Dendritic cell treated with granulocyte-macrophage colony-stimulating factor and Interleukin-4, amounts not matched to agents 40 ng/mL and 50 ng/mL, for 4 days (primary cell): ENCODE measurements at regions of chr6 and their contacts with region 1.

Region 1: GRCh38 chr6:147202516-147203312 is 1.5 kb upstream of the STXBP5 start:
- H3K4me3 Mint-ChIP-seq: peak overlapping the region; percentile 85
- H3K27ac Mint-ChIP-seq: peak overlapping the region; percentile 94
- H3K4me1 Mint-ChIP-seq: peaks cover 35% of the 10 kb centered on the region
- H3K27me3 Mint-ChIP-seq: no peaks in the 10 kb centered on the region

Region 2: GRCh38 chr6:145734486-145735355 is 1468.0 kb before region 1 on chr6:
- intact Hi-C with region 1: loop called (anchors 10 kb)
- H3K4me3 Mint-ChIP-seq: peak overlapping the region; percentile 99
- H3K27ac Mint-ChIP-seq: peak overlapping the region; percentile 97
- H3K4me1 Mint-ChIP-seq: peaks cover 31% of the 10 kb centered on the region
- H3K27me3 Mint-ChIP-seq: no peaks in the 10 kb centered on the region

Region 3: DNA sequence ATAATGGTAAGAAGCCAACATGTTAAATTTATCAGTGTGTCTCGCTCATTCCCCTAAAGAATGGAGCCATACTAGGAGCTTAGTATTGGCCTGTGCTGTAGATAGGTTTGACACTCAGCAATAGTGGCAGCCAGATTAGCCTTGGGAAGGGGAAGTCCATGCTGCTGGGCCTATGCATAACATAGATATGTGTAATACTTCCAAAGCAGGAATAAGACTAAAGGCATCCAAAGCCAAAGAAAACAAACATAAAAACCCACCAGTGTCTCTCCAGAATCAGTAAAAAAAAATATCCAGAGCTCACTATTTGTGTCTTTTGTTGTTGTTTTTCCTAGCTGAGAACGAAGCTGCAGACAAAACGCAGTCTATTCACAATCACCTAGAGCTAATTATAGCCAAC is 102.7 kb before region 1 on chr6:
- intact Hi-C with region 1: no loop called
- H3K4me3 Mint-ChIP-seq: no peak overlapping the region
- H3K27ac Mint-ChIP-seq: no peak overlapping the region
- H3K4me1 Mint-ChIP-seq: peaks cover 12% of the 10 kb centered on the region
- H3K27me3 Mint-ChIP-seq: no peaks in the 10 kb centered on the region

Region 4: DNA sequence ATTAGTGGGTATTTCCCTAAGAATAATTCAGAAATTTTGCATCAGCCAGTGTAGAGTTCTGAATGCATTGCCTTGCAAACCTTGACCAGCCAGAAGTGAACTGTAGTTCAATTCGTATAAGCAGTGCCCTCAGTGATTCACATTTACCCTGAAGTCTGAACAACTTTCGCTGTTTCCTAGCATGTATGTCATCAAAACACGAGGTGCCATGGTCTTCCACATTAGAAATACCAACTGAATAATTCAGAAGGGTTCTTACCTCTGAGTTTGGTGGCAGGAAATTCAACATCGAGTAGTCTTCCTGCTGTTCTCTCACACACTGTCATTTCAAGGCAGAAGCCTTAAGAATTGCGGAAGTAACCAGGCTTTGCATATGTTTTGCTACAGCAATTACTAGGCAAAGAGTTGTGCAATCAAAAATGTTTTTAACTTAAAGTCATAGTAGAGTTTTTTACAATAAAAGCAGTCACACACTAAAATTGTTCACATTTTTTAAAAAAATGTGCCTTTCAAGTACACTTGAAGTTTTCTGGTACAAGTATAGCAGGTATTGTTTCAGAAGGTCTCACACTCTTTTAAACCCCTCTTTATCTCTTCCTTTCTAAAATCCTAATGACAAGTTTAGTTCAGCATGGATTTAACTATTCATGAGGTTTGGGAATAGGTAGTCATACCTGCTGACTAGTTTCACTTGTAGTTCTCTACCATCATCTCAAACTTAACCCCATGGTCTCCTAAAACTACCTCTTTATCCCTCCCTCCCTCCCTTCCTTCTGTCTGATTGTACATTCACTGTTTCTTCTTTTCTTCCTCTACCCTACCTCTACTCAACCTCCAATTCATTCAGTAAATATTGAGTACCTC is 119.8 kb after region 1 on chr6:
- intact Hi-C with region 1: loop called (anchors 2 kb)
- H3K4me3 Mint-ChIP-seq: peak overlapping the region; percentile 68
- H3K27ac Mint-ChIP-seq: peak overlapping the region; percentile 83
- H3K4me1 Mint-ChIP-seq: peaks cover 27% of the 10 kb centered on the region
- H3K27me3 Mint-ChIP-seq: no peaks in the 10 kb centered on the region

Region 5: GRCh38 chr6:147418523-147418922 is 215.8 kb after region 1 on chr6:
- intact Hi-C with region 1: no loop called
- H3K4me3 Mint-ChIP-seq: no peak overlapping the region
- H3K27ac Mint-ChIP-seq: no peak overlapping the region
- H3K4me1 Mint-ChIP-seq: no peaks in the 10 kb centered on the region
- H3K27me3 Mint-ChIP-seq: no peaks in the 10 kb centered on the region